Lower leg skin (tissue), 4 donors: ENCODE measurements at regions of chrX and their contacts with region 1.

Region 1: GRCh38 chrX:100274916-100275315 is 135.2 kb downstream of the PCDH19 start:
- DNase-seq: no peak
- H3K4me3 ChIP-seq: no peak overlapping the region
- CTCF ChIP-seq: no peak
- POLR2A ChIP-seq: no peak

Region 2: DNA sequence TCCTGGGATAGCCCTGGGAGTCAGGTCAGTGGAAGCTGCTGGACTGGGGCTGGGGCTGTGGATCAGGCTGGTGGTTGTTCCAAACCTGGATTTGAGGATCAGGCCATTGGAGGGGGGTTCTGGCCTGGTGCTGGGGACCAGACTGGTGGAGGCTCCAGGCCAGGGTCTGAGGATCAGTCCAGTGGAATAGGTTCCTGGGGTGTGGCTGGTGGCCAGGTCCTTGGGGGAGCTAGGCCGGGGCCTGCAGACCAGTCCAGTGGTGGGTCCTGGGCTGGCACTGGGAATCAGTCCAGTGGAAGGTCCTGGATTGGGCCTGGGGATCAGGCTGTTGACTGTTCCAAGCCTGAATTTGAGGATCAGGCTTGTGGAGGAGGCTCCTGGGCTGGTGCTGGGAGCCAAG is 1218.3 kb after region 1 on chrX:
- intact Hi-C with region 1: loop called (anchors 5 kb)
- DNase-seq: no peak
- H3K4me3 ChIP-seq: no peak overlapping the region
- CTCF ChIP-seq: no peak
- POLR2A ChIP-seq: no peak